MCF 10A (cell line): ENCODE measurements at regions of chr4 and their contacts with region 1.

Region 1: GRCh38 chr4:102826890-102827673 is at the start of gene UBE2D3:
- DNase-seq: peak; percentile 90
- H3K4me3 Mint-ChIP-seq: no peak within 1 kb of the TSS
- H3K27ac Mint-ChIP-seq: no peak within 1 kb of the TSS
- H3K4me1 Mint-ChIP-seq: peaks cover 11% of the 10 kb centered on the region
- H3K27me3 Mint-ChIP-seq: no peaks in the 10 kb centered on the region
- CTCF ChIP-seq: no peak
- total RNA-seq, gene UBE2D3: 505 and 547 TPM in 2 replicates

Region 2: GRCh38 chr4:102430461-102430910 is 396.6 kb before region 1 on chr4:
- CTCF ChIA-PET with region 1: no interaction called
- POLR2A ChIA-PET with region 1: interaction called, 13 read pairs
- intact Hi-C with region 1: no loop called
- DNase-seq: peak; percentile 35
- H3K4me3 Mint-ChIP-seq: peak overlapping the region; percentile 81
- H3K27ac Mint-ChIP-seq: peak overlapping the region; percentile 73
- H3K4me1 Mint-ChIP-seq: peaks cover 11% of the 10 kb centered on the region
- H3K27me3 Mint-ChIP-seq: no peaks in the 10 kb centered on the region
- CTCF ChIP-seq: no peak

Region 3: DNA sequence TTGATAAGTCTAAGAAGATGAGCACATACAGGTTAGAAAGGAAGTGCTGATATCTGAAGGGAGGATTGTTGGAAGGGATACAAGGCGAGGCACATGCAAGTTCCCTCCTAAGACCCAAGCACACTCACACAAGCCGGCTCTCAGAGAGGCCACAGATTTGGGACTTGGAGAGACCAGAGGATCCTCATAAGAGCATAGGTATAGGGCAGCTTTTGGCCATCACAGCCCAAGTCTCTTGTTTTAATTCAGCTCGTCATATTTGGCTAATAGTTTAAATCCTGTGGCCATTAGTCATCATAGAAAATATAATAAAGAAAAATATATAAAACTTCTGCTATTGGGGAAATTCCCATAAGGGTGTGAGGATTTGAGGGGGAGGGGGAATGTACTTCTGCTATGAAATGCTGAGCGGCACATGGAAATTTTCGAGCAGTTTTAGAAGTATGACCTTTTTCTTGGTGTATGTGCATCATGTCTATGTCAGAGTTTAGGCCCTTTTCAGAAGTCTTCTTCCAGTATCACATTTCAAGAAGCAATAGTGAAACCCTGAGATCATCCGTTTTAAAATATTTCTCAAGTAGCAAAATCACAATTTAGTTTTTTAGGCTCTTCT is 228.2 kb before region 1 on chr4:
- CTCF ChIA-PET with region 1: no interaction called
- POLR2A ChIA-PET with region 1: interaction called, 10 read pairs
- intact Hi-C with region 1: no loop called
- DNase-seq: no peak
- H3K4me3 Mint-ChIP-seq: no peak overlapping the region
- H3K27ac Mint-ChIP-seq: no peak overlapping the region
- H3K4me1 Mint-ChIP-seq: peaks cover 16% of the 10 kb centered on the region
- H3K27me3 Mint-ChIP-seq: no peaks in the 10 kb centered on the region
- CTCF ChIP-seq: no peak

Region 4: GRCh38 chr4:102687373-102687981 is 139.6 kb before region 1 on chr4:
- CTCF ChIA-PET with region 1: no interaction called
- POLR2A ChIA-PET with region 1: interaction called, 3 read pairs
- intact Hi-C with region 1: loop called (anchors 1 kb)
- DNase-seq: peak; percentile 67
- H3K4me3 Mint-ChIP-seq: no peak overlapping the region
- H3K27ac Mint-ChIP-seq: no peak overlapping the region
- H3K4me1 Mint-ChIP-seq: no peaks in the 10 kb centered on the region
- H3K27me3 Mint-ChIP-seq: no peaks in the 10 kb centered on the region
- CTCF ChIP-seq: no peak

Region 5: GRCh38 chr4:102815981-102816380 is 11.1 kb before region 1 on chr4:
- CTCF ChIA-PET with region 1: interaction called, 10 read pairs
- POLR2A ChIA-PET with region 1: interaction called, 153 read pairs
- intact Hi-C with region 1: no loop called
- DNase-seq: peak; percentile 51
- H3K4me3 Mint-ChIP-seq: no peak overlapping the region
- H3K27ac Mint-ChIP-seq: peak overlapping the region; percentile 29
- H3K4me1 Mint-ChIP-seq: peaks cover 57% of the 10 kb centered on the region
- H3K27me3 Mint-ChIP-seq: no peaks in the 10 kb centered on the region
- CTCF ChIP-seq: no peak

Region 6: DNA sequence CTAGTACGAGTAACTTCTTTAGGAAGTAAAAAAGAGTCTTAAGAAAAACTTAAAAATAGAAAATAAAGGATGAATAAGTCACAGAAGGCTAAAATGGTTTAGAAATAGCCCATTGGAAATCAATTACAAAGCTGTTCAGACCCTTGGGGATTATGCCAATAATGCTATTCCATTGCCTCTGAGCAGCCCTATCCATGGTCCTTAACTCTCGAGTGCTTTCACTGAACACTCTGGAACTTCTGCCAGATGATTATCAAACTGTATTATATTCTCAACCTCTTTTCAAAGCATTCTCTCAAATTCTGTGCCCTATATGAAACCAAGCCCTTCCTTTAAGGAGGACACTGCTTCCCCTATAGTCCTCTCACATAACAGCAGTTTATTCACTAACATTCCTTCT is 175.5 kb after region 1 on chr4:
- CTCF ChIA-PET with region 1: interaction called, 5 read pairs
- POLR2A ChIA-PET with region 1: interaction called, 19 read pairs
- intact Hi-C with region 1: no loop called
- DNase-seq: peak; percentile 18
- H3K4me3 Mint-ChIP-seq: no peak overlapping the region
- H3K27ac Mint-ChIP-seq: no peak overlapping the region
- H3K4me1 Mint-ChIP-seq: no peaks in the 10 kb centered on the region
- H3K27me3 Mint-ChIP-seq: peaks cover 24% of the 10 kb centered on the region
- CTCF ChIP-seq: no peak

Region 7: GRCh38 chr4:103091601-103092223 is 264.6 kb after region 1 on chr4:
- CTCF ChIA-PET with region 1: interaction called, 4 read pairs
- POLR2A ChIA-PET with region 1: interaction called, 18 read pairs
- intact Hi-C with region 1: loop called (anchors 5 kb)
- DNase-seq: peak; percentile 67
- H3K4me3 Mint-ChIP-seq: no peak overlapping the region
- H3K27ac Mint-ChIP-seq: no peak overlapping the region
- H3K4me1 Mint-ChIP-seq: peaks cover 14% of the 10 kb centered on the region
- H3K27me3 Mint-ChIP-seq: no peaks in the 10 kb centered on the region
- CTCF ChIP-seq: peak; percentile 60